Mammary epithelial cell (primary cell): ENCODE measurements at regions of chr9 and their contacts with region 1.

Region 1: GRCh38 chr9:35553670-35554543 is 51.2 kb upstream of the TESK1 start:
- DNase-seq: peak; percentile 47
- H3K4me3 ChIP-seq: no peak overlapping the region
- H3K27ac ChIP-seq: no peak overlapping the region
- H3K4me1 ChIP-seq: peaks cover 7% of the 10 kb centered on the region
- H3K27me3 ChIP-seq: no peaks in the 10 kb centered on the region
- CTCF ChIP-seq: peak; percentile 88 to 91

Region 2: DNA sequence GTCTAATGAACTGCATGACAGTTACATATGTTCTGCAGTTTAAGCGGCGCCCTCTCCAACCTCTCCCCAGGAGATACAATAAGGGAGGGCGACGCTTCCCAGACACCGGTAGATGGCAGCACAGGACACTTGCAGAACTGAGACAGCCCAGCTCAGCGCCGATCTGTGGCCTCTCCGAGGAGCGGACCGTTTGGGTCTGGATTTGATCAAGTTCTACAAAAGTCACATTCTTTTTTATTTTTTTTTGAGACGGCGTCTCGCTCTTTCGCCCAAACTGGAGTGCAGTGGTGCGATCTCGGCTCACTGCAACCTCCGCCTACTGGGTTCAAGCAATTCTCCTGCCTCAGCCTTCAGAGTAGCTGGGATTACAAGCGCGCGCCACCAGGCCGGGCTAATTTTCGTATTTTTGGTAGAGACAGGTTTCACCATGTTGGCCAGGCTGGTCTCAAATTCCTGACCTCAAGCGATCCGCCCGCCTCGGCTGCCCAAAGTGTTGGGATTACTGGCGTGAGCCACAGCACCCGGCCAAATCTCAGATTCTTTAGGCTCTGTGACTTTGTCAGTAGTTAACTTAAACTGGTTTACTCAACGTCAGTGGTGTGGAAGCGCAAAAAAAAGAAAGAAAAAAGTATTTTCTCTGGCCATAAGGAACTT is 436.9 kb before region 1 on chr9:
- CTCF ChIA-PET with region 1: no interaction called
- dilution Hi-C with region 1: no loop called
- in situ Hi-C with region 1: no loop called
- intact Hi-C with region 1: loop called (anchors 2 kb)
- DNase-seq: peak; percentile 84
- H3K4me3 ChIP-seq: peak overlapping the region; percentile 44 to 84 (median 60)
- H3K27ac ChIP-seq: no peak overlapping the region
- H3K4me1 ChIP-seq: peaks cover 23% of the 10 kb centered on the region
- H3K27me3 ChIP-seq: no peaks in the 10 kb centered on the region
- CTCF ChIP-seq: peak; percentile 95 to 99

Region 3: GRCh38 chr9:35470894-35471293 is 83.0 kb before region 1 on chr9:
- CTCF ChIA-PET with region 1: no interaction called
- dilution Hi-C with region 1: loop called (anchors 5 kb)
- in situ Hi-C with region 1: no loop called
- intact Hi-C with region 1: no loop called
- DNase-seq: peak; percentile 67
- H3K4me3 ChIP-seq: no peak overlapping the region
- H3K27ac ChIP-seq: no peak overlapping the region
- H3K4me1 ChIP-seq: no peaks in the 10 kb centered on the region
- H3K27me3 ChIP-seq: no peaks in the 10 kb centered on the region
- CTCF ChIP-seq: no peak

Region 4: GRCh38 chr9:35510745-35511428 is 43.0 kb before region 1 on chr9:
- CTCF ChIA-PET with region 1: interaction called, 4 read pairs
- dilution Hi-C with region 1: loop called (anchors 5 kb)
- in situ Hi-C with region 1: no loop called
- intact Hi-C with region 1: loop called (anchors 1 kb)
- DNase-seq: peak; percentile 50
- H3K4me3 ChIP-seq: no peak overlapping the region
- H3K27ac ChIP-seq: peak overlapping the region; percentile 41
- H3K4me1 ChIP-seq: peaks cover 21% of the 10 kb centered on the region
- H3K27me3 ChIP-seq: no peaks in the 10 kb centered on the region
- CTCF ChIP-seq: peak; percentile 13 to 37

Region 5: GRCh38 chr9:35603987-35604577 is 50.2 kb after region 1 on chr9:
- CTCF ChIA-PET with region 1: no interaction called
- dilution Hi-C with region 1: loop called (anchors 5 kb)
- in situ Hi-C with region 1: no loop called
- intact Hi-C with region 1: no loop called
- DNase-seq: peak; percentile 99
- H3K4me3 ChIP-seq: peak overlapping the region; percentile 60 to 67 (median 64)
- H3K27ac ChIP-seq: peak overlapping the region; percentile 68
- H3K4me1 ChIP-seq: peaks cover 28% of the 10 kb centered on the region
- H3K27me3 ChIP-seq: no peaks in the 10 kb centered on the region
- CTCF ChIP-seq: peak; percentile 82 to 83